Activated naive CD4-positive, alpha-beta T cell treated with anti-CD3 and anti-CD28 coated beads, Interleukin-2, amount 10 ng/mL, durations not matched to agents 7 days and 5 days (primary cell): ENCODE measurements at regions of chr6 and their contacts with region 1.

Region 1: DNA sequence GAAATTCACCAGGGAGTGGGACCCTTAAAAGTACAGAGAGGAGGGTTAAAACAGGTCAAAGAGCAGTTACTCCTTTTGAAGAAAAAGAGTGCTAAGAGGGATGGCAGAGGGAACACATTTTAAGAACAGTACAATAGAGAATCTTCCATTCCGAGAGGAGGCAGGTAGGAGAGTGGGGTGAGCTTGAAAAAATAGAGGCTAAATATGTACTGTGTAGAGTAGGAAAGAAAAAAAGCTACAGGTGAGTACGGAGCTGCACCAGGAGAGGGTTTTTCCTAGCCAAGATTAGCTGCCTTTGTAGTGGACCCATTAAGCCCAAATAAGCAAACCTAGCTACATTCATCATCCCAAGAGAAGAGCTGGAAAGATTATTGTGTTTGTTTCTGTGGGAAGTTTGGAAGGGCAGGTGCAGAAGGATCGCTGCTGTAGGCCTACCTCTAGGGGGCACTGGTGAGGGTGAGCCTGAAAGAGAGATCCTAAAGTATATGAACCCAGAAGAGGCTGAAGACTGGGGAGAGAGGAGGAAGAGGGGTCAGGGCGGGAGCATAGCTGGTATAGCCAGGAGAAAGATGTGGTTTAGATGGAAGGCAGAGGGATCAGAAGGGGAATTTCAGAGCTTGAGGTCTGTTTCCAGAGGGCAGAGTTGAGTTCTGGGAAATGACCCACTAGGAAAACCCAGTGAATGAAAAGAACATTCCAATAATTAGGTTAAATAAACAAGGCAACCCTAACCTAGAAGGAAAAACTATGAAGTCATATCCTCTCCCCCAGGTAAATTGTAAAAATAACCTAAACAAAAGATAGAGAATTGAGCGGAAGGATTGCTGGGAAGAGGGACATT is 50.2 kb upstream of the HINT3 start:
- DNase-seq: peak; percentile 65
- H3K4me3 Mint-ChIP-seq: no peak overlapping the region
- H3K27ac Mint-ChIP-seq: no peak overlapping the region
- H3K4me1 Mint-ChIP-seq: peaks cover 22% of the 10 kb centered on the region
- H3K27me3 Mint-ChIP-seq: no peaks in the 10 kb centered on the region

Region 2: GRCh38 chr6:125797886-125798444 is 108.4 kb before region 1 on chr6:
- CTCF ChIA-PET with region 1: no interaction called
- DNase-seq: no peak
- H3K4me3 Mint-ChIP-seq: no peak overlapping the region
- H3K27ac Mint-ChIP-seq: no peak overlapping the region
- H3K4me1 Mint-ChIP-seq: peaks cover 23% of the 10 kb centered on the region
- H3K27me3 Mint-ChIP-seq: no peaks in the 10 kb centered on the region

Region 3: GRCh38 chr6:125918681-125919566 is 12.5 kb after region 1 on chr6:
- CTCF ChIA-PET with region 1: interaction called, 51 read pairs
- DNase-seq: peak; percentile 70
- H3K4me3 Mint-ChIP-seq: peak overlapping the region; percentile 79
- H3K27ac Mint-ChIP-seq: peak overlapping the region; percentile 94
- H3K4me1 Mint-ChIP-seq: peaks cover 44% of the 10 kb centered on the region
- H3K27me3 Mint-ChIP-seq: no peaks in the 10 kb centered on the region